K562 (cell line): ENCODE measurements at regions of chr20 and their contacts with region 1.

Region 1: DNA sequence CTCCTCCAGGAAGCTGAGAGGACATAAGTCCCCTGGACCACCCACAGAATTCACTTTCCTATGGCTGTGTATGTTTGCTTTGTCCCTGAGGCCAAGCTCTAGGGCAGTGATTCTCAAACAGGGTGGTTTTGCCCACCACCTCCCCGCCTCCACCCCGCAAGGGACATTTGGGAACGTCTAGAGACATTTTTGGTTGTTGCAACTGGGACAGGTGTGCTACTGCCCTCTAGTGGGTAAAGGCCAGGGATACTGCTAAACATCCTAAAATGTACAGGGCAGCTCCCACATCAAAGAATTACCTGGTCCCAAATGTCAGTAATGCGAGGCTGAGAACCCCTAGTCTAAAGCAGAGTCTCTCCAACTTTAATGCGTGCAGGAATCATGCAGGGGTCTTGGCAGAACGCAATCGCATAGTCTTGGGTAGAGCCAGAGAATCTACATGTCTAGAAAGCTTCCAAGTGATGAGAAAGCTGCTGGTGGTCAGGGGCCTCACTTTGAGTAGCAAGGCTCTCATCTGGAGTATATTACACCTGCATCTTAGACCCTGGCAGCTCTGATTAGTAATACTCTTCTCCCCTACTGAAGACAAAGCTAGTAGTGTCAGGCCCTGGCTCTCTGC is 5.1 kb downstream of the KCNS1 start:
- DNase-seq: peak; percentile 63 to 69 (median 64)
- ATAC-seq: peak; percentile 90
- H3K4me3 ChIP-seq: no peak overlapping the region
- H3K27ac ChIP-seq: no peak overlapping the region
- H3K4me1 ChIP-seq: peaks cover 0 to 13% of the 10 kb centered on the region in 2 experiments; a peak in 1 of 5 replicates
- H3K27me3 ChIP-seq: peaks cover 13 to 21% of the 10 kb centered on the region in 2 experiments
- CTCF ChIP-seq: peak; percentile 56 to 88 (median 78)
- EP300 ChIP-seq: no peak
- POLR2A ChIP-seq: no peak
- RAD21 ChIP-seq: peak; percentile 55 to 74

Region 2: DNA sequence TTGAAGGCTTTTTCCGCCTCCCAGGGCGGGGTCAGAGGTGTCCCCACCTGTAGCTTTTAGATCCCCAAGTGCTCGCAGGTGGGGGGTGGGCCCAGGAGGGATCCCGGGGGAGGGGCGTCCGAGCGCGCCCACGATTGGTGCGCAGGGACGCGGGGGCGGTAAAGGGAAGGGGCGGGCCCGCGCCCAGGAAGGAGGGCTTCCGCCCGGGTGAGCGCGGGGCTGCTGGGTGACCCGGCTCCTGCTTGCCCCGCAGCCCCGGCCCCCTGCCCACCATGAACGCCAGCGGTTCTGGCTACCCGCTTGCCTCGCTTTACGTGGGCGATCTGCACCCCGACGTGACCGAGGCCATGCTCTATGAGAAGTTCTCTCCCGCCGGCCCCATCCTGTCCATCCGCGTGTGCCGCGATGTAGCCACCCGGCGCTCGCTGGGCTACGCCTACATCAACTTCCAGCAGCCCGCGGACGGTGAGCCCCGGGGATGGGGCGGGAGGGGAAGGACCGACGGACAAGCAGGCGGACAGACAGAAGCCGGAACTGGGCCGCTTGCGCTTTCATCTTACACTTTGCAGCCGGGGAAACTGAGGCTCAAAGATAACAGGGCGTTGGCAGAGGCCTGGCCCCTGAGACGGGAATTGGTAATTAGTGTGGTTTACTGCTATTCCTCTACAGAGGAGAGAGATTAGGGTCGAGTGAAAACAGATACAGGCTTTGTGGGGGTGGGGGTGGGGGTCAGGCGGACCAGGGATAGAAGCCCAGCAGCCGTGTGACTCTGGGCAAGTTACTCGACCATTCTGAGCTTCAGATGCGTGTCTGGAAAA is 185.8 kb before region 1 on chr20 and contains the start of gene PABPC1L:
- CTCF ChIA-PET with region 1: no interaction called
- POLR2A ChIA-PET with region 1: no interaction called
- in situ Hi-C with region 1: no loop called
- intact Hi-C with region 1: loop called (anchors 10 kb)
- DNase-seq: peak; percentile 88 to 97 (median 96)
- ATAC-seq: peak; percentile 93
- H3K4me3 ChIP-seq: peak within 1 kb of the TSS; percentile 56
- H3K27ac ChIP-seq: peak within 1 kb of the TSS; percentile 80
- H3K4me1 ChIP-seq: peaks cover 14 to 24% of the 10 kb centered on the region in 2 experiments
- H3K27me3 ChIP-seq: no peaks in the 10 kb centered on the region
- CTCF ChIP-seq: no peak
- EP300 ChIP-seq: no peak
- POLR2A ChIP-seq: peak; percentile 86
- RAD21 ChIP-seq: no peak
- polyA plus RNA-seq, gene PABPC1L: 6.0 to 7.2 TPM

Region 3: GRCh38 chr20:44979090-44979621 is 116.7 kb before region 1 on chr20:
- CTCF ChIA-PET with region 1: no interaction called
- POLR2A ChIA-PET with region 1: no interaction called
- in situ Hi-C with region 1: no loop called
- intact Hi-C with region 1: no loop called
- DNase-seq: peak in 2 of 4 experiments; percentile 49 to 65
- ATAC-seq: peak; percentile 91
- H3K4me3 ChIP-seq: no peak overlapping the region
- H3K27ac ChIP-seq: peak overlapping the region; percentile 66
- H3K4me1 ChIP-seq: peaks cover 11 to 15% of the 10 kb centered on the region in 2 experiments; a peak in 4 of 5 replicates
- H3K27me3 ChIP-seq: no peaks in the 10 kb centered on the region
- CTCF ChIP-seq: no peak
- EP300 ChIP-seq: no peak; the same call in 1 of the 2 replicates
- POLR2A ChIP-seq: no peak
- RAD21 ChIP-seq: no peak

Region 4: DNA sequence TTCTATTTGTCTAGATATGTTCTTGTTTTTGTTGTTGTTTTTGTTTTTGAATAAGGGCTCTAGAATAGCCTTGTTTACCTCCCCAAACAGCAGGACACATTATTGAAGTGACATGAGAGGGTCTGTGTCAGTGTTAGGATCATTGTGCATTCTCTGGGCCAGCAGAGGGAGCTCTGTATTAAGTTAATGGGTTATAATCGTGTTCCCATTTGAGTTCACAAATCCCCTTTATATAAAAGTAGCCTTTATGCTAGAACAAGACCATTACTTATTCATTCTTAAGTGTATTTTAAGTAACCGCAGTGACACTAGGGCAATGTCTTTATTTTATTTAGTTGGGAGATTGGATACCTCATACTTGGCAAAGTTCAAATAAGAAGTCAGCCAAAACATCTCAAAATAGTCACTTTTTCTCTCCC is 84.7 kb before region 1 on chr20:
- CTCF ChIA-PET with region 1: interaction called, 19 read pairs
- POLR2A ChIA-PET with region 1: no interaction called
- in situ Hi-C with region 1: no loop called
- intact Hi-C with region 1: loop called (anchors 1 kb)
- DNase-seq: peak; percentile 20 to 60 (median 34)
- ATAC-seq: peak; percentile 85
- H3K4me3 ChIP-seq: no peak overlapping the region
- H3K27ac ChIP-seq: no peak overlapping the region
- H3K4me1 ChIP-seq: no peaks in the 10 kb centered on the region
- H3K27me3 ChIP-seq: no peaks in the 10 kb centered on the region
- CTCF ChIP-seq: peak; percentile 55 to 86 (median 73)
- EP300 ChIP-seq: no peak
- POLR2A ChIP-seq: no peak
- RAD21 ChIP-seq: peak; percentile 53 to 84; a peak in 3 of 4 replicates

Region 5: GRCh38 chr20:45044084-45044573 is 51.7 kb before region 1 on chr20:
- CTCF ChIA-PET with region 1: interaction called, 34 read pairs
- POLR2A ChIA-PET with region 1: interaction called, 4 read pairs
- in situ Hi-C with region 1: no loop called
- intact Hi-C with region 1: loop called (anchors 1 kb)
- DNase-seq: peak; percentile 34 to 73 (median 52)
- ATAC-seq: peak; percentile 89
- H3K4me3 ChIP-seq: no peak overlapping the region
- H3K27ac ChIP-seq: no peak overlapping the region
- H3K4me1 ChIP-seq: no peaks in the 10 kb centered on the region
- H3K27me3 ChIP-seq: no peaks in the 10 kb centered on the region
- CTCF ChIP-seq: peak; percentile 70 to 92 (median 82)
- EP300 ChIP-seq: no peak
- POLR2A ChIP-seq: no peak
- RAD21 ChIP-seq: peak; percentile 74 to 79

Region 6: DNA sequence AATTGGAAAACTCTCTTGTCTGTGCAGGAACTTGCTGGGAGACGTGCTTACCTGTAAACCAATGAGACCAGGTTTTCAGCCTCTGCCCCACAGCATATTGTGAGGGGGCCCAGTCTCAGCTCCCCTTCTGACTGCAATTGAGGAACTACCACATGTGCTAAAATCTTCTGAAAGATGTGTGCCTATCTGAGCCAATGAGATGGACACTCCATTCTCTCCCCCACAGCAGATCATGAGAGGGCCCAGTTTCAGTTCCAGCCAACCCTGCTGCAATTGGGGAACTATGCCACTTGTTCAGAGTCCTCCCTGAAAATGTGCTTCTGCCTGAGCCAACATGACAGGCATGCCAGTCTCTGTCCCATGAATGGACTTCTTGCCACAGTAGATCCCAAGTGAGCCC is 57.9 kb after region 1 on chr20:
- CTCF ChIA-PET with region 1: no interaction called
- POLR2A ChIA-PET with region 1: no interaction called
- in situ Hi-C with region 1: no loop called
- intact Hi-C with region 1: no loop called
- DNase-seq: no peak
- ATAC-seq: no peak
- H3K4me3 ChIP-seq: no peak overlapping the region
- H3K27ac ChIP-seq: no peak overlapping the region
- H3K4me1 ChIP-seq: no peaks in the 10 kb centered on the region
- H3K27me3 ChIP-seq: no peaks in the 10 kb centered on the region; a peak in 1 of 5 replicates
- CTCF ChIP-seq: no peak
- EP300 ChIP-seq: no peak
- POLR2A ChIP-seq: no peak
- RAD21 ChIP-seq: no peak